ENCODE measurements at regions of chr18 and their contacts with region 1.

Region 1: DNA sequence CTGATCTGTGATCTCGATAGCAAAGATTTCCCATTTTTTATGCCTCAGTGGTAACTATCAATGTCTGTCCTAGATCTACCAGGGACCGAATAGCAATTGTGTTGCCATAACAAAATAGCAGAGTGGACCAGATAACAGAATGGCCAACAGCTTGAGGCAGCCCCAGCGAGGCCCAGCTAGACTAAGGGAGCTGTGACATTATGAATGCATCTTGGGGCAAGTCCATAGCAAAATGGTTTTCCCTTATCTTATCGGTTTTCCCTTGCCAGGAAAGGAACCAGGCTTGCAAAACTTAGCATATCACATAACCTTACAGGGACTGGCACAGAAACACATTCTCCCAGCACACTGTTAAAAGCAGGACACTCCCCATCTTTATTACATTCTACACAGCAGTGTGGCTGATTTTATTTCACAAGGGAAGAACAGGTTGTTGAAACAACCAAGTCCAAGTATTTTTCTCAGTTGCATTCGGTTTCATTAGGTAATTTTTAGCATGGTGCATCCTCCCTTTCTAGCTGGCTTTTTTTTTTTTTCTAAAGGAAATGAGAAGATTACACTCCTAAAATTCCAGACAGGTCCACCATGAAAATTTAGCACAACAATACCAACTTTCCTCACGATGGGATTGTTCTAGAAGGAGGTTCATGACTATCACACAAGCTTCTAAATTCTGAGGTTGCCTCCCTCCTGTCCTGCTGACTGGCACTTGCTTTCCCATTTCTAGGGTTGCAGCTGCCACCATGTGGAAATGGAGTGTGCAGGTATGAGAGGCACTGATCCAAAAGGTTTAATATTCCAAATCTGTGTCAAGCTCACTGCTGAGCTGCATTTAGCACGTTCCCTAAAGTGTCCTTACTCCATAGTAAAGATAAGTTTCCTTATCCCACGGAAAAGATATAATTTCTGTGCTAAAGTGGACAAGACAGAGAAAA is 97.0 kb upstream of the SLC35G4 start:
- DNase-seq: peak; percentile 32
- H3K4me3 Mint-ChIP-seq: no peak overlapping the region
- H3K27ac Mint-ChIP-seq: no peak overlapping the region
- H3K4me1 Mint-ChIP-seq: no peaks in the 10 kb centered on the region
- H3K27me3 Mint-ChIP-seq: peaks cover 17% of the 10 kb centered on the region
- CTCF ChIP-seq: no peak

Region 2: GRCh38 chr18:10755855-10756254 is 756.5 kb before region 1 on chr18:
- CTCF ChIA-PET with region 1: interaction called, 12 read pairs
- intact Hi-C with region 1: no loop called
- DNase-seq: no peak
- H3K4me3 Mint-ChIP-seq: no peak overlapping the region
- H3K27ac Mint-ChIP-seq: no peak overlapping the region
- H3K4me1 Mint-ChIP-seq: peaks cover 6% of the 10 kb centered on the region
- H3K27me3 Mint-ChIP-seq: no peaks in the 10 kb centered on the region
- CTCF ChIP-seq: no peak

Region 3: DNA sequence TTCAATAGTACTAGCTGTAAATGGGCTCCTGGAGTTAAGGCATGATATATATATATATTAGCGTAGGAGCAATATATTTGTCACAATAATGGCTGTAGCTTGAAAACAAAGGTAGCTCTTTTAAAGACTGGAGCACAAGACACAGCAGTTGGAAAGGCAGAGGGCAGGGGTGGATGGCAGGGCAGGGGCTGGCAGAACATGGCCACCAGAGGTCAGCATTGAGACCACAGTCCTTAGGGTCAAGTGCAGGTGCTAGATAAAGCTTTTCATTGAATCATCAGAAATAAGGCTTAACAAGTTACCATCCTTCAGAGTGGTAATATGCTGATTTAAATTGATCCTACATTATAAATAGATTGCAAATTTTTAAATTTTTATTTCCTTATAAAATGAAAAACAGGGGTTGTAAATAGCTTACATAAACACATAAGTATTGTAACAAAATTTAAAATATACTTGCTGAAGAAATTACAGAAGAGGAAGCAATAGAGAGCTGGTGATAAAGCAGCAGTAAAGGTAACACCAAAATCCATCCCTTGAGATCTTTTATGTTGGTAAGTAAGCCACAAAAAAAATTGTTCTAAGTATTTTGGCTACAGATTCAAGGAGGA is 201.8 kb before region 1 on chr18:
- CTCF ChIA-PET with region 1: interaction called, 25 read pairs
- intact Hi-C with region 1: loop called (anchors 2 kb)
- DNase-seq: peak; percentile 73
- H3K4me3 Mint-ChIP-seq: no peak overlapping the region
- H3K27ac Mint-ChIP-seq: no peak overlapping the region
- H3K4me1 Mint-ChIP-seq: no peaks in the 10 kb centered on the region
- H3K27me3 Mint-ChIP-seq: peaks cover 8% of the 10 kb centered on the region
- CTCF ChIP-seq: peak; percentile 81